Activated CD4-positive, alpha-beta memory T cell treated with anti-CD3 and anti-CD28 coated beads for 36 hours (primary cell): ENCODE measurements at regions of chr12 and their contacts with region 1.

Region 1: DNA sequence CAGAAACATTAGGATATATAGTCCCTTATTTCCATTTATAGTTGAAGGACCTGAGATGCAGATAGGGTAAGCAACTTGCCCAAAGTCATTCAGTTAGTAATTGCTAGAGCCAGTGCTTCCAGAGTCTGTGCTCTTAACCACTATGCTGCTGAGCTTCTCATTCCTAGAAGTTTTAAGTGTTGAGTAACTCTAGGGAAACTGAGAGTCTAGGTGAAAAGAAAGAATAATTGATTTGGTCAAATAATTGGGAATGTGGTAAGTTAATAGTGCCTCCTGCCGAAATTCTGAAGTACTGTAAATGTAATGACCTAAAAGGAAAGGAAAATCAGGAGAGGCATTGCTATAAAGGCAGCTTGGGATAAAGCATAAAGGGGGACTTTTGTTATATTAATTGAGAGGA is 14.1 kb downstream of the PYROXD1 start:
- DNase-seq: no peak
- H3K4me3 Mint-ChIP-seq: no peak overlapping the region
- H3K27ac Mint-ChIP-seq: no peak overlapping the region
- H3K4me1 Mint-ChIP-seq: peaks cover 40% of the 10 kb centered on the region
- H3K27me3 Mint-ChIP-seq: no peaks in the 10 kb centered on the region

Region 2: GRCh38 chr12:21384261-21384660 is 67.3 kb before region 1 on chr12:
- CTCF ChIA-PET with region 1: no interaction called
- POLR2A ChIA-PET with region 1: no interaction called
- intact Hi-C with region 1: no loop called
- DNase-seq: no peak
- H3K4me3 Mint-ChIP-seq: no peak overlapping the region
- H3K27ac Mint-ChIP-seq: no peak overlapping the region
- H3K4me1 Mint-ChIP-seq: no peaks in the 10 kb centered on the region
- H3K27me3 Mint-ChIP-seq: peaks cover 7% of the 10 kb centered on the region

Region 3: GRCh38 chr12:21438643-21439042 is 12.9 kb before region 1 on chr12:
- CTCF ChIA-PET with region 1: interaction called, 3 read pairs
- POLR2A ChIA-PET with region 1: interaction called, 4 read pairs
- intact Hi-C with region 1: loop called (anchors 1 kb)
- DNase-seq: no peak
- H3K4me3 Mint-ChIP-seq: peak overlapping the region; percentile 93
- H3K27ac Mint-ChIP-seq: peak overlapping the region; percentile 96
- H3K4me1 Mint-ChIP-seq: peaks cover 39% of the 10 kb centered on the region
- H3K27me3 Mint-ChIP-seq: no peaks in the 10 kb centered on the region

Region 4: GRCh38 chr12:21476949-21477348 is 25.4 kb after region 1 on chr12:
- CTCF ChIA-PET with region 1: no interaction called
- POLR2A ChIA-PET with region 1: no interaction called
- intact Hi-C with region 1: loop called (anchors 1 kb)
- DNase-seq: no peak
- H3K4me3 Mint-ChIP-seq: no peak overlapping the region
- H3K27ac Mint-ChIP-seq: peak overlapping the region; percentile 73
- H3K4me1 Mint-ChIP-seq: peaks cover 14% of the 10 kb centered on the region
- H3K27me3 Mint-ChIP-seq: no peaks in the 10 kb centered on the region

Region 5: GRCh38 chr12:21507849-21508248 is 56.3 kb after region 1 on chr12:
- CTCF ChIA-PET with region 1: no interaction called
- POLR2A ChIA-PET with region 1: no interaction called
- intact Hi-C with region 1: no loop called
- DNase-seq: no peak
- H3K4me3 Mint-ChIP-seq: no peak overlapping the region
- H3K27ac Mint-ChIP-seq: no peak overlapping the region
- H3K4me1 Mint-ChIP-seq: peaks cover 51% of the 10 kb centered on the region
- H3K27me3 Mint-ChIP-seq: no peaks in the 10 kb centered on the region

Region 6: GRCh38 chr12:21518451-21518850 is 66.9 kb after region 1 on chr12:
- CTCF ChIA-PET with region 1: no interaction called
- POLR2A ChIA-PET with region 1: no interaction called
- intact Hi-C with region 1: no loop called
- DNase-seq: no peak
- H3K4me3 Mint-ChIP-seq: no peak overlapping the region
- H3K27ac Mint-ChIP-seq: no peak overlapping the region
- H3K4me1 Mint-ChIP-seq: peaks cover 2% of the 10 kb centered on the region
- H3K27me3 Mint-ChIP-seq: no peaks in the 10 kb centered on the region

Region 7: DNA sequence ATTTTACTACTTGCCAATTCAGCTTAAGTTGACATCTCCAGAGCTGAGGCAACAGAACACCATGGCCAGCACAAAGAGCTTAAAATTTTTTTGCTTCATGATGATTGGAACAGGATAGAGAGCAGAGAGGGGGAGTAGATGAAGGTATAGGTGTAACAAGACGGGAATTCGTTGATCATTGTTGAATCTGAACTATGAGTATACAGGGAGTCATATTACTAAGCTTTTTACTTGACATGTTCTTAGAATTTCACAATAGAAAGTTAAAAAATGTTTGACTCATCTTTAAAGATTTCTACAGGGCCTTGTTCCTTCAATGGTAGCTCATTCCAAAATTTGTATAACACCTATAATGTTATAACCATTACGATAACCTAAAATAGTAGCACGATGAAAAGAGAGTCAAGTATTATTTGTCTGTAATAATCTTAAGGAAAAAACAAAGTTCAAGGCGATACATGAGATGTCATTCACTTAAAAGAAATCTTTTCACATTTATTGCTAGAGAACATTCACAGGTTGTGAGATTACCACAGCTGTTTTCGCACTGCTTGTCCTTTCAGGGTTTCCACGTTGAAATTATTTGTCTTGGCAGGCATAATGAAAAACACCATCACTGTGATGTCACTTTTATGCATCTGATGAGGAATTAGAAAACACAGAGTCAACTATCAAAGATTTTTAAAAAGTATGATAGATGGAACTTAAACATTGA is 108.5 kb after region 1 on chr12:
- CTCF ChIA-PET with region 1: no interaction called
- POLR2A ChIA-PET with region 1: no interaction called
- intact Hi-C with region 1: loop called (anchors 1 kb)
- DNase-seq: no peak
- H3K4me3 Mint-ChIP-seq: no peak overlapping the region
- H3K27ac Mint-ChIP-seq: peak overlapping the region; percentile 82
- H3K4me1 Mint-ChIP-seq: peaks cover 11% of the 10 kb centered on the region
- H3K27me3 Mint-ChIP-seq: no peaks in the 10 kb centered on the region

Region 8: GRCh38 chr12:21657326-21658077 is 206.0 kb after region 1 on chr12 and contains the start of gene LDHB:
- CTCF ChIA-PET with region 1: no interaction called
- POLR2A ChIA-PET with region 1: interaction called, 3 read pairs
- intact Hi-C with region 1: loop called (anchors 1 kb)
- DNase-seq: peak; percentile 98
- H3K4me3 Mint-ChIP-seq: peak within 1 kb of the TSS; percentile 98
- H3K27ac Mint-ChIP-seq: peak within 1 kb of the TSS; percentile 95
- H3K4me1 Mint-ChIP-seq: peaks cover 60% of the 10 kb centered on the region
- H3K27me3 Mint-ChIP-seq: no peaks in the 10 kb centered on the region
- total RNA-seq, gene LDHB: 1,684 to 1,884 TPM